ENCODE measurements at regions of chr4 and their contacts with region 1.

Region 1: GRCh38 chr4:5963611-5964010 is 54.6 kb downstream of the C4orf50 start:
- DNase-seq: no peak
- H3K4me3 ChIP-seq: no peak overlapping the region
- H3K27ac ChIP-seq: no peak overlapping the region
- H3K4me1 ChIP-seq: peaks cover 0 to 3% (median 0%) of the 10 kb centered on the region in 4 experiments; a peak in 1 of 7 replicates
- H3K27me3 ChIP-seq: no peaks in the 10 kb centered on the region; a peak in 1 of 7 replicates
- CTCF ChIP-seq: peak in 1 of 3 experiments; percentile 34; a peak in 1 of 4 replicates
- EP300 ChIP-seq: no peak
- POLR2A ChIP-seq: no peak
- RAD21 ChIP-seq: peak; percentile 5 to 33; a peak in 1 of 4 replicates

Region 2: DNA sequence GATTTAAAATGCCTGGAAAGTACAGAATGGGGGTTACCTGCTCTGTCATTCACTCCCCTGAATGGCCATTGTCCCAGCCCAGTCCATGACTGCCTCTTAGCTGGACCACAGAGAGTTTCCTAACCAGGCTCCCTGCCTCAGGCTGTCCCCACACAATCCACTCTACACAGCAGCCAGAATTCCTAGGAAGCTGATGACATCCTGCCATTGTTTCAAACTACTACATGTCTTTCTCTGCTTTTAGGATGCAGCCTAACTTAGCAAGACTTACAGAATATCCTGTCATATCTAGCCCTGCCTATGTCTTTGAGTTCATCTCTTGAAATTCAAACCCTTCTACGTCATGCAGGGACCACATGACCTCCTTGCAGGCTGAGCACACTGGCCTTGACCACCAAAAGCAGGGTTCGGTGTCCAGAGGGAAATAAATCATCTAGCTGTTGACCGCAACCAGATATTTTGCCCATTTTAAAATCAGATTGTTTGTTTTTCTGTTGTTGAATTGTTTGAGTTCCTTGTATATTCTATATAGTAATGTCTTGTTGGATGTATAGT is 54.7 kb before region 1 on chr4:
- CTCF ChIA-PET with region 1: no interaction called
- POLR2A ChIA-PET with region 1: no interaction called
- DNase-seq: no peak
- H3K4me3 ChIP-seq: no peak overlapping the region
- H3K27ac ChIP-seq: no peak overlapping the region
- H3K4me1 ChIP-seq: peaks cover 10 to 35% (median 18%) of the 10 kb centered on the region in 4 experiments; a peak in 6 of 7 replicates
- H3K27me3 ChIP-seq: peaks cover 0 to 33% (median 24%) of the 10 kb centered on the region in 4 experiments; a peak in 6 of 7 replicates
- CTCF ChIP-seq: no peak
- EP300 ChIP-seq: no peak
- POLR2A ChIP-seq: no peak
- RAD21 ChIP-seq: no peak

Region 3: DNA sequence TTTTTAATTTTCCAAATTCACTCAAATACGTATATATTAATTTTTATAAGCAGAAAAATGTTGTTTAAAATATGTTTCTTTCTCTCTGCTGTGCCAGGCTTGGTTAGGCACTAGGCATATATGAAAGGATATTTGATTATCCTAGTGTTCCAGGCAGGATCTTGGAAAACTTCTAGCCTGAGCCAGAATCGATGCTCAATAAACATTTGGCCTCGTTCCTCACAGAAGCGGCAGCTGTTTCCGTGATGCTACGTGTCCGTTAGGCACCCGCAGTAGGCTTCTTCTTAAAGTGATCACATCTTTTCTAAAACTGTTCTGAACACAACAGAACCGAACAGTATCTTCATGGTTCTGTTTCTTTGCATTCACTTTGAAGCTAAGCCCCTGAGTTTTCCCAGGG is 20.7 kb before region 1 on chr4:
- CTCF ChIA-PET with region 1: interaction called, 15 read pairs
- POLR2A ChIA-PET with region 1: no interaction called
- DNase-seq: no peak
- H3K4me3 ChIP-seq: no peak overlapping the region
- H3K27ac ChIP-seq: no peak overlapping the region
- H3K4me1 ChIP-seq: peaks cover 0 to 6% (median under 1%) of the 10 kb centered on the region in 4 experiments; a peak in 1 of 7 replicates
- H3K27me3 ChIP-seq: peaks cover 0 to 5% (median 0%) of the 10 kb centered on the region in 4 experiments; a peak in 1 of 7 replicates
- CTCF ChIP-seq: no peak
- EP300 ChIP-seq: no peak
- POLR2A ChIP-seq: no peak
- RAD21 ChIP-seq: no peak

Region 4: DNA sequence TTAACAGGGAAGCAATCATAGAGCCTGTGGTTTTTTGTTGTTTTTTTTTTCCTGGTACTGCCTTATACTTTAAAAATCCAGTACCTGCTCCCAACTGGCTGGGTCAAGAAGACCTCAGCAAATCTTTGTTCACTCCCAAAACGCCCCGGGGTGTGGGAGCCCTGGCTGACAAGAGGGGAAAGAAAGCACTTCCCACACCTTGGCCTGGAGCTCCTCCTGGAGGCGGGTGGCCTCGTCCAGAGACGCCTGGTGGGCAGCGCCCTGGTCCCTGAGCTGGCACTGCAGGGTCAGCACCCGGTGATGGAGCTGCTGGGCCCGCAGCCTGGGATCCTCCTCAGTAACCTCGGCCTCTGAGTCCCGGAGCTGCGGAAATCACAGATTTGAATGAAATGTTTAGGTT is 16.4 kb after region 1 on chr4:
- CTCF ChIA-PET with region 1: interaction called, 73 read pairs
- POLR2A ChIA-PET with region 1: interaction called, 3 read pairs
- DNase-seq: peak; percentile 56 to 87
- H3K4me3 ChIP-seq: no peak overlapping the region
- H3K27ac ChIP-seq: no peak overlapping the region
- H3K4me1 ChIP-seq: peaks cover 0 to 2% (median 0%) of the 10 kb centered on the region in 4 experiments; a peak in 1 of 7 replicates
- H3K27me3 ChIP-seq: no peaks in the 10 kb centered on the region
- CTCF ChIP-seq: peak; percentile 92 to 99 (median 92)
- EP300 ChIP-seq: no peak
- POLR2A ChIP-seq: no peak
- RAD21 ChIP-seq: peak; percentile 99 to 100